ENCODE measurements at regions of chr2 and their contacts with region 1.

Region 1: DNA sequence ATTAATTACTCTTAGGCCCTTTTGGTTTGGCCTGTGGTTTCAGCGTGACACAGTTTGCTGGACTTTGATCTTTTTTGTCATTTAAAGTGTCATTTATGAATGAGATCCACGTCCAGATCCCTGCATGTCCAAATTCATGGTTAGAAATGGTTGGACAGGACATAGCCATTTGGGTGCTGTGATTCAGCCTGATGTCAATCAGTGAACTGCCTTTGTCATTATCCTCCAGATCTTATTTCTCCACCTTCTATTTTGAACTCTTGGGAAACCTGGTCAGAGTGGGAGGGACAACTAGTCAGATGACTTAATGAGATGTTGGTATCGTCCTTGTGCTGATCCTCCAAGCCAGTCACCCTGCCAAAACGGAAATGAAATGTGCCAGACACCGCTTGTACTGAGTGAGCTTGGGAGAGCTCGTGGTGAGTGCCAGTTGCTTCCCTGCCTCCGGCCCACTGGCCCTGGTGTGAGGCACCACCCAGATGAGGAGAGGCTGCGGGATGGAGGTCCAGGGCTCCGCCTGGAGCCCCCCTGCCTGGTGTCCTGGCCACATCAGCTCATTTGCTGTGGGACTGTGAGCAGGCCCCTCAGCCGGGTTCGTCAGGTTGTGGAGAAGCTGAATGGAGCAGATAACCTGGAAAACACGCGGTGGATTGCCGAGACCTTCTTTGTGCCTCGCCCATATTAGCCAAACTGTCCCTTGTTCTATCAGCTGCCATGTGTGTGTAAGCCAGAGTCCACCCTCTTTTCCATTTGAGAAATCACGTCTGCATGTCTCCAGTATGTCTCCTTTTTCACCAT is 70.1 kb downstream of the DGKD start:
- DNase-seq: no peak
- ATAC-seq: no peak
- H3K4me3 Mint-ChIP-seq: peak overlapping the region in 9 of 10 donors; percentile 32 to 96 (median 88)
- H3K27ac Mint-ChIP-seq: peak overlapping the region; percentile 91 to 99 (median 96)
- H3K4me1 Mint-ChIP-seq: peaks cover 58 to 98% (median 95%) of the 10 kb centered on the region in 4 donors
- H3K27me3 Mint-ChIP-seq: no peaks in the 10 kb centered on the region

Region 2: GRCh38 chr2:233413559-233414272 is 10.6 kb before region 1 on chr2:
- POLR2A ChIA-PET with region 1: interaction called, 292 read pairs
- DNase-seq: peak; percentile 35 to 84 (median 64)
- ATAC-seq: peak; percentile 58 to 60
- H3K4me3 Mint-ChIP-seq: peak overlapping the region; percentile 10 to 83 (median 76)
- H3K27ac Mint-ChIP-seq: peak overlapping the region; percentile 75 to 97 (median 92)
- H3K4me1 Mint-ChIP-seq: peaks cover 41 to 99% (median 93%) of the 10 kb centered on the region in 4 donors
- H3K27me3 Mint-ChIP-seq: no peaks in the 10 kb centered on the region